Heart right ventricle (tissue), 16 donors: ENCODE measurements at regions of chr7 and their contacts with region 1.

Region 1: GRCh38 chr7:51357821-51358220 is 41.2 kb upstream of the COBL start:
- DNase-seq: no peak
- ATAC-seq: peak in 3 of 8 donors; percentile 25 to 30 (median 29)
- H3K4me3 ChIP-seq: no peak overlapping the region
- H3K27ac ChIP-seq: peak overlapping the region in 4 of 10 donors; percentile 9 to 68 (median 52)
- H3K4me1 ChIP-seq: peaks cover 0 to 9% (median 0%) of the 10 kb centered on the region in 9 donors
- H3K27me3 ChIP-seq: no peaks in the 10 kb centered on the region
- CTCF ChIP-seq: peak in 4 of 9 donors; percentile 9 to 30 (median 16)

Region 2: DNA sequence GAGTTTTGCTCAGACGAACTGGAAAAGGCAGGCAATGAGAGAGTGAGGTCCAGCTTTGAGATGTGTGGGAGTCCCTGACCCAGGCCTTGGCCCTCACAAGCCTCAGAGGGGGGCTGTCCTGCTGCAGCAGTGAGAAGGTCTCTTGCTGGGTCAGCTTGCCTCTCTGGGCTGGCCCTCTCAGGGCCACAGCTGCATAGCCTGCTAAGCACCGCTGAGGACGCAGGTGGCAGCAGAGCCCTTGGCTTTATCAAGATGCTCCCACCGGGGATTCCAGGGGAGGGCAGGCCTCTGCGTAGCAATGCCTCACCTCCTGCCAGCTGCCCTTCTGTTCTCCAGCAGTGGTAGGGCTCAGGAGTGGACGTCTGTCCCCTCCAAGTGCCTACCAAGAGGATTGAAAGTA is 169.9 kb before region 1 on chr7:
- intact Hi-C with region 1: loop called in 4 of 10 experiments (anchors 5 to 10 kb)
- DNase-seq: peak; percentile 33 to 47
- ATAC-seq: peak; percentile 63 to 86 (median 77)
- H3K4me3 ChIP-seq: no peak overlapping the region
- H3K27ac ChIP-seq: peak overlapping the region in 7 of 10 donors; percentile 17 to 69 (median 52)
- H3K4me1 ChIP-seq: peaks cover 0 to 44% (median 21%) of the 10 kb centered on the region in 9 donors
- H3K27me3 ChIP-seq: no peaks in the 10 kb centered on the region
- CTCF ChIP-seq: peak in 7 of 9 donors; percentile 15 to 50 (median 30)

Region 3: DNA sequence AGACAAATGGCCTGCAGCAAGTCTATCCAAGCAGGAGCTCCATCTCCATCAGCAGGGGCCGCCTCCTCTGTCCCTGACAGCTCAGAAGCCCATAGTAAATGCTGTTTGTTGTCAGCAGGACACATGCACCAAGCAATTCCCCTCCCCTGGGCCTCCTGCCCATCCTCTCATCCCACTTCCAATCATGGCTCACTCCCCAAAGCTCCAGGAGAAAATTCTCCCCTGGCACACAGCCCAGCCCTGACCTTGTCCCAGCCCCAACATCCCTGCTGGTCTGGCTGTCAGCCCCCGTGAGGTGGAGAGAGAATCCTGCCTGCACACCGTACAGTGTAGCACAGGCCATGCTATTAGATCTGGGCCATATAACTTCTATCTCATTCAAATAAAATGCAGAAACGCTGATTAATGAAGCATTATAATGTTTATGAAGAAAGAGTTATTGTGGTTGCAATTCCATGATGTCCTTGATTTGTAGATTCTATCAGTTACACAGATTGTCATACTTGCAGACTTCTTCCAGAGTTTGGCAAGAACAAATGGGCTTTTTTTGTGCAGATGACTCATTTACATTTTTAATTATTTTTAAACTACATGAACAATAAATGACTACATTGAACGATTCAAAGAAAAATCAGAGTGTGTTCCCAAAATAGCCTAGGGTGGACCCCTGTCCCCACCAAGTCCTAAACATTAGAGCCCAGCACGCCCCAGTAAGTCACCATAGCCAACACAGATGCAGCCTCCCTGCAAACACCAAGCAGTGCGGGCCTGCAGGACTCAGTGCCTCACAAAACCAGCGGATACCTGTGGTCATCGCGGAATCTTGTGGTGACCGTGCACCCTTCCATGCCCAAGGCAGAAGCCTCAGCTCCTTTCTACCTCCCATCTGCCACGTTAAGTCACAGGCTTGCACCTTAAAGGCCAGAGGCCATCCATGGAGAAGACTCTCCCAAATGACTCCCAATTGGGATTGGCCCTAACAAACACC is 111.3 kb before region 1 on chr7:
- intact Hi-C with region 1: loop called in 5 of 10 experiments (anchors 5 kb)
- DNase-seq: peak; percentile 82 to 88
- ATAC-seq: peak; percentile 84 to 97 (median 93)
- H3K4me3 ChIP-seq: no peak overlapping the region
- H3K27ac ChIP-seq: peak overlapping the region in 2 of 10 donors; percentile 9 to 30
- H3K4me1 ChIP-seq: peaks cover 0 to 41% (median 4%) of the 10 kb centered on the region in 9 donors
- H3K27me3 ChIP-seq: no peaks in the 10 kb centered on the region
- CTCF ChIP-seq: peak in 4 of 9 donors; percentile 5 to 30 (median 27)

Region 4: GRCh38 chr7:51253161-51253560 is 104.7 kb before region 1 on chr7:
- intact Hi-C with region 1: loop called in 5 of 10 experiments (anchors 5 kb)
- DNase-seq: no peak
- ATAC-seq: peak in 1 of 8 donors; percentile 41
- H3K4me3 ChIP-seq: no peak overlapping the region
- H3K27ac ChIP-seq: no peak overlapping the region
- H3K4me1 ChIP-seq: peaks cover 0 to 44% (median 6%) of the 10 kb centered on the region in 9 donors
- H3K27me3 ChIP-seq: no peaks in the 10 kb centered on the region
- CTCF ChIP-seq: peak in 6 of 9 donors; percentile 10 to 43 (median 28)

Region 5: DNA sequence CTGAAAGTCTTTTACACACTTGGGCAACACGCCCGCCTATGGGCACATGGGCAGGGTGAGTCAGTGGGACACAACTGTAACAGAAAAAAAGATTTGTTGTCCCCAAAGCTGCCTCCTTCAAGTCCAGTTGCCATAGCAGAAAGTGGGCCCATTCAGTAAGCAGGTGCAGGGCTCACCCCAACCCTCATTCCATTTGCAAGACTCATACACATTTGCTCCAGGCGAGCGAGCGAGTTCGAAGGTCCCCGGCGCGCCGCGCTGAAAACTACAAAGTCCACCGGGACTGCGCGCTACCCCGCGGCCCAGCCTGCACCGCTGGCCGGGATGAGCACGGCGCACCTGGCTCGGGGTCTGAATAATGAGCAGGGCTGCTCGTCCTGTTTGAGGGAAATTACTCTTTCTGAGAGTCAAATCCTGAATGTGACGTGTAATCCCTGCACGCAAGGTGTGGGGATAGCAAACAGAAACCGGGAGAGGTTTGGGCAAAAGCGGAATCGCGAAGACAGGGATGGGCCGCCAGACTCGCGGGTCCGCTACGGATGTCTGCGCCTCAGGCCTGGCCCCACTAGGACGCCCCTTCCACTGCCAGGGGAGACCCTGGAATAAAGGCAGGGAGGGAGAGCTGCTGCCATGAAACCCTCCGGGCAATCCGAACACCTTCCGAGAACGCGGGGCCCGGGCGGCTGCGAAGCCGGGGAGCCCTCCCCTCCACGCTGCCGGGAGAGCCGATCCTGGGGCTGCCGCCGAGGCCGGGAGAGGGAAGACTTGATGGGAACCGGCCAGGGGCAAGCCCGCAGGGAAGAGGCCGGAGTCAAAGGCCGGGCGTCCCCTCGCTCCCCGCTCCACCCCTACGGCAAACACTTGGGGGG is 42.2 kb before region 1 on chr7:
- intact Hi-C with region 1: loop called in 2 of 10 experiments (anchors 5 kb)
- DNase-seq: peak in 1 of 2 donors; percentile 22
- ATAC-seq: peak; percentile 49 to 76 (median 66)
- H3K4me3 ChIP-seq: peak overlapping the region; percentile 49 to 71 (median 64)
- H3K27ac ChIP-seq: peak overlapping the region; percentile 44 to 80 (median 74)
- H3K4me1 ChIP-seq: peaks cover 0 to 23% (median 7%) of the 10 kb centered on the region in 9 donors
- H3K27me3 ChIP-seq: peaks cover 0 to 55% (median 22%) of the 10 kb centered on the region in 7 donors
- CTCF ChIP-seq: no peak